PC-3 (cell line): ENCODE measurements at regions of chr3 and their contacts with region 1.

Region 1: DNA sequence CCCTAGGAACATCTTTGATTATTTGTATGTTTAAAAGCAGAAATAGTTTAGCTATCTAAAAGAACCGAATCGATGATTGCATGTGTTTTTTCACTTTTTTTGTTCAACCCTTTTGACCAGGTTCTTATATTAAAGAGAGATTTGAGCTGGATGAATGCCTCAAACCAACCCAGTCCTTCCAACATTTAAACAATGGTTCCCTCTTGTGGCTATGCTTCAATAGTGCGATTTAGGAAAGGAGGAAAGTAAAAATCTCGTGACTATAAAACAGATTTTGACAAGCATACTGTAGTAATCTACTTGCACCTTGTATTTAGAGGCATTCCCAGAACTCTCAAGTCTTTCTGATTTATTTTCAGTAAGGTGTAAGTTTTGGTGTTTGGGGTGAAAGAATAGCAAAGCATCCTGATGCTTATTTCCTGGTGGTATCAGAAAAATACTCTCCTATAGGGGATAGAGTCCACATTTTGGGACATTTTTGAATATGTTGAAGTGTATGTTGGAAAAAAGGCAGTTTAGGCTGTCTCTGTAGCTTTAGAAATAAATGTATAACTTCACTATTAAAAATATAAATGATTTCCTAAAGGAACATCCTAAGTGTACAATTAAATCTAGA is 159.6 kb upstream of the KCNH8 start:
- DNase-seq: peak; percentile 81
- ATAC-seq: peak; percentile 76
- H3K4me3 ChIP-seq: peak overlapping the region; percentile 32
- H3K27ac ChIP-seq: peak overlapping the region; percentile 27
- H3K4me1 ChIP-seq: peaks cover 13% of the 10 kb centered on the region
- H3K27me3 ChIP-seq: no peaks in the 10 kb centered on the region
- CTCF ChIP-seq: peak; percentile 94

Region 2: DNA sequence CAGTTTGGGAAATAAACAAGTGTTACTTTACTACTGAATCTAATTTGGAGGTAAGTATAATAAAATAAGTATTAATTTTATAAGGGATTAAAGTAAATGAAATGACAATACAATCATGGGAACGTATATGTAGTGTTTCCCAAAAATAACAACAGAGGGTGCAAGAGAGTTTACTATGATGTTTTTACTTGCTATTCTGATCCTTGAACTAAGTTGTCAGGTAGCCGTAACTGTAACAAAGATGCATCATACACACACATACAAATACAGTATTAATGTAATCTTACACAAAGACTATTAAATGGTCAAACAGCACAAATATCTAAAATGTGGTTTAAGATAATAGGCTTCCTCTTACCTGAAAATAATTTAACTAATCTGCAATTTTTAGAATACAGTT is 1557.7 kb before region 1 on chr3:
- CTCF ChIA-PET with region 1: no interaction called
- POLR2A ChIA-PET with region 1: no interaction called
- intact Hi-C with region 1: loop called (anchors 5 kb)
- DNase-seq: peak; percentile 68
- ATAC-seq: peak; percentile 81
- H3K4me3 ChIP-seq: no peak overlapping the region
- H3K27ac ChIP-seq: no peak overlapping the region
- H3K4me1 ChIP-seq: peaks cover 12% of the 10 kb centered on the region
- H3K27me3 ChIP-seq: no peaks in the 10 kb centered on the region
- CTCF ChIP-seq: peak; percentile 62

Region 3: GRCh38 chr3:18559331-18559842 is 429.3 kb before region 1 on chr3:
- CTCF ChIA-PET with region 1: interaction called, 4 read pairs
- POLR2A ChIA-PET with region 1: no interaction called
- intact Hi-C with region 1: loop called (anchors 1 kb)
- DNase-seq: peak; percentile 82
- ATAC-seq: peak; percentile 47
- H3K4me3 ChIP-seq: no peak overlapping the region
- H3K27ac ChIP-seq: peak overlapping the region; percentile 21
- H3K4me1 ChIP-seq: peaks cover 53% of the 10 kb centered on the region
- H3K27me3 ChIP-seq: no peaks in the 10 kb centered on the region
- CTCF ChIP-seq: peak; percentile 89

Region 4: GRCh38 chr3:18766974-18767373 is 221.7 kb before region 1 on chr3:
- CTCF ChIA-PET with region 1: no interaction called
- POLR2A ChIA-PET with region 1: no interaction called
- intact Hi-C with region 1: loop called (anchors 2 kb)
- DNase-seq: peak; percentile 22
- ATAC-seq: no peak
- H3K4me3 ChIP-seq: no peak overlapping the region
- H3K27ac ChIP-seq: peak overlapping the region; percentile 33
- H3K4me1 ChIP-seq: peaks cover 24% of the 10 kb centered on the region
- H3K27me3 ChIP-seq: no peaks in the 10 kb centered on the region
- CTCF ChIP-seq: no peak

Region 5: GRCh38 chr3:18888368-18888767 is 100.4 kb before region 1 on chr3:
- CTCF ChIA-PET with region 1: interaction called, 3 read pairs
- POLR2A ChIA-PET with region 1: interaction called, 4 read pairs
- intact Hi-C with region 1: loop called (anchors 1 kb)
- DNase-seq: peak; percentile 23
- ATAC-seq: no peak
- H3K4me3 ChIP-seq: no peak overlapping the region
- H3K27ac ChIP-seq: no peak overlapping the region
- H3K4me1 ChIP-seq: 0 out of 2 replicates have a peak, but pooled peaks cover 5% of the 10 kb centered on the region
- H3K27me3 ChIP-seq: peaks cover 9% of the 10 kb centered on the region; the same call in 1 of the 2 replicates
- CTCF ChIP-seq: peak; percentile 46

Region 6: GRCh38 chr3:19165654-19166053 is 176.9 kb after region 1 on chr3:
- CTCF ChIA-PET with region 1: no interaction called
- POLR2A ChIA-PET with region 1: no interaction called
- intact Hi-C with region 1: no loop called
- DNase-seq: no peak
- ATAC-seq: no peak
- H3K4me3 ChIP-seq: no peak overlapping the region
- H3K27ac ChIP-seq: no peak overlapping the region
- H3K4me1 ChIP-seq: no peaks in the 10 kb centered on the region
- H3K27me3 ChIP-seq: 0 out of 2 replicates have a peak, but pooled peaks cover 5% of the 10 kb centered on the region
- CTCF ChIP-seq: no peak